ENCODE measurements at regions of chr2 and their contacts with region 1.

Region 1: GRCh38 chr2:216519154-216519762 is 20.6 kb downstream of the RPL37A start:
- DNase-seq: peak in 25 of 35 experiments; percentile 2 to 75 (median 31)
- ATAC-seq: peak in 3 of 4 experiments; percentile 37 to 57 (median 40)
- H3K4me3 ChIP-seq: no peak overlapping the region
- H3K4me3 Mint-ChIP-seq: no peak overlapping the region
- H3K27ac ChIP-seq: no peak overlapping the region
- H3K27ac Mint-ChIP-seq: no peak overlapping the region
- H3K4me1 ChIP-seq: no peaks in the 10 kb centered on the region
- H3K4me1 Mint-ChIP-seq: no peaks in the 10 kb centered on the region
- H3K27me3 ChIP-seq: no peaks in the 10 kb centered on the region
- H3K27me3 Mint-ChIP-seq: no peaks in the 10 kb centered on the region

Region 2: GRCh38 chr2:216551234-216551633 is 32.0 kb after region 1 on chr2:
- CTCF ChIA-PET with region 1: no interaction called
- POLR2A ChIA-PET with region 1: no interaction called
- DNase-seq: no peak
- ATAC-seq: no peak
- H3K4me3 ChIP-seq: no peak overlapping the region
- H3K4me3 Mint-ChIP-seq: no peak overlapping the region
- H3K27ac ChIP-seq: no peak overlapping the region
- H3K27ac Mint-ChIP-seq: no peak overlapping the region
- H3K4me1 ChIP-seq: peaks cover 0 to 23% of the 10 kb centered on the region in 2 experiments
- H3K4me1 Mint-ChIP-seq: peaks cover 0 to 6% (median 0%) of the 10 kb centered on the region in 3 donors
- H3K27me3 ChIP-seq: no peaks in the 10 kb centered on the region
- H3K27me3 Mint-ChIP-seq: peaks cover 0 to 9% of the 10 kb centered on the region in 2 donors

Region 3: DNA sequence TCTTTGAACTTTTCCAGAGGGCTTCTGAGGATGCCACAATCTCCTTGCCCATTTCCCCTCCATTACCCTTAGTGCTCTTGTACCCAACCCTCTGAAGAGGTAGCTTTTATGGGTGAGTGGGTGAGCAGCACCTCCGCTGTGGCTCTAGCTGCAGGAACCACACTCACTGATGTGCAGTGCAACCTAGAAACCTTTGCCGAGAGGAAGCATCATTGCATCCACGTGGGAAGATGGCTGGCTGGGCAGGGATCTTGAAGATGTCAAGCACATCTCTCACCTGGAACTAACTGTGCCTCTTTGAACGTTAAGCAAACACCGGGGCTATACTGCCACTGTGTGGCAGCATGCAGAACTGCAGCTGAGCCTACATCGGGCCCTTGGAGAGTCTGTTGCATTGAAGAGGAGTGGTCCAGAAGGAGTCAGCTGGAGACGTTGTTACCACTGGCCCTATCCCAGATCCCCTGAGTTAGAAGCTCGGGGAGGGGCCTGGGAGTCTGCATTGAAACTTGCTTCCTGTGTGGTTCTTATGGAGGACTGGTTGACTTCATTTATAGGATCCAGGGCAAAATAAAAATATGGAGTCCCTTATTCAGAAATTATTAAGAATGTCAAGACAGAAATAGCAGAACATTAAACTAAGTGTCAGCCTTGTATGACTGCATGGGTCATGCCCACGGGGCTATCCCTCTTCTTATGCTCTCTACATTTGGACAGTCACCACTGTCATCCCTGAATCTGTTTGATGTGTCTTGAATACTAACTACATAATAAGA is 147.4 kb after region 1 on chr2:
- CTCF ChIA-PET with region 1: interaction called, 26 to 36 read pairs
- POLR2A ChIA-PET with region 1: no interaction called
- DNase-seq: peak; percentile 20 to 81 (median 55)
- ATAC-seq: peak; percentile 68 to 75 (median 72)
- H3K4me3 ChIP-seq: no peak overlapping the region
- H3K4me3 Mint-ChIP-seq: no peak overlapping the region
- H3K27ac ChIP-seq: no peak overlapping the region
- H3K27ac Mint-ChIP-seq: no peak overlapping the region
- H3K4me1 ChIP-seq: no peaks in the 10 kb centered on the region
- H3K4me1 Mint-ChIP-seq: no peaks in the 10 kb centered on the region
- H3K27me3 ChIP-seq: peaks cover 0 to 37% of the 10 kb centered on the region in 2 experiments
- H3K27me3 Mint-ChIP-seq: peaks cover 18 to 21% of the 10 kb centered on the region in 2 donors